ENCODE measurements at regions of chr4 and their contacts with region 1.

Region 1: GRCh38 chr4:145936142-145936996 is 2.3 kb downstream of the ZNF827 start:
- DNase-seq: peak; percentile 39 to 90
- H3K4me3 ChIP-seq: peak overlapping the region; percentile 65
- CTCF ChIP-seq: no peak
- POLR2A ChIP-seq: no peak

Region 2: DNA sequence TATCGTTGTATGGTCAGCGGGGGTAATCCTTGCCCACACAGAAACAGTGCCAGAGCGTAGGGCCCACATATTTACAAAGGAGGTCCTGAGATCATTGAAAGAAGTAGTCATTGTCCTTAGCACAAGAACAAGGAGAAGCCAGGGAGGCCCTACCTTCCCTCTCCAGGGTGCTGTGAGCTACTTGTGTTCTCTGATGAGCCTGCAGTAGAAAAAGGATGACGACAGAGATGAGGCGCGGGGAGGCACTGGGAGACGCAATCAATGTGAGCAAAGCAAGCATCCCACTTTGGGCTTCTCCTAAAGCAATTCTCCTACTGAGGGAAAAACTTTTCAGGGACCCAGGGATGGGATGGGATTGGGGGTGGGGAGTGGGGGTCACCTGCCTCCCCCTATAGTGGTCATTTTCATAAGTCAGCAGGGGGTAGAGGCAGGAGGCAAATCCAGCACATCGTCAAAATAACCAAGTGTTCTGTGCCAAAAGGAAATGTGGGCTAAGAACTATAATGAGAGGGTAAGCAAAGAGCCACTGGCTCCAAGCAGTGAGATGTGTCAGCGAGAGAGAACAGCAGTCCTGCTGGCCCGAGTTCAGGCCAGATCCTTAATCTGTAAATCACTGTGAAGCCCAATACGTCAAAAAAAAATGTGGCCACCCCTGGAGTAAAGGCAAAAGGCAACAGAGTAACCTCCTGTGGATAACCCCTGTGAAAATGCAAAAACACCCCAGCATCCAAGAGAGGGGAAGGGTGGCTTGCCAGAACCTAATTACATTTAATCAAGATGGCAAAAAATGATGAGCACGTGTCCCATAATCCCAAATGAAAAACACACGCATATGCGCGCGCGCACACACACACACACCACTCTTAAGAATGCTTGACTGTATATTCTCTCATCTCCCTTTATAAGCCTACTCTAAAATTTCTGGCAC is 1427.0 kb before region 1 on chr4:
- intact Hi-C with region 1: no loop called
- DNase-seq: no peak
- H3K4me3 ChIP-seq: no peak overlapping the region
- CTCF ChIP-seq: no peak
- POLR2A ChIP-seq: no peak

Region 3: GRCh38 chr4:145618932-145619638 is 317.3 kb before region 1 on chr4 and contains the start of gene MMAA:
- intact Hi-C with region 1: loop called (anchors 5 kb)
- DNase-seq: peak; percentile 91 to 99
- H3K4me3 ChIP-seq: peak within 1 kb of the TSS; percentile 36
- CTCF ChIP-seq: no peak
- POLR2A ChIP-seq: peak in 1 of 2 donors; percentile 88
- total RNA-seq, gene MMAA: 4.9 to 9.3 (median 7.2) TPM

Region 4: DNA sequence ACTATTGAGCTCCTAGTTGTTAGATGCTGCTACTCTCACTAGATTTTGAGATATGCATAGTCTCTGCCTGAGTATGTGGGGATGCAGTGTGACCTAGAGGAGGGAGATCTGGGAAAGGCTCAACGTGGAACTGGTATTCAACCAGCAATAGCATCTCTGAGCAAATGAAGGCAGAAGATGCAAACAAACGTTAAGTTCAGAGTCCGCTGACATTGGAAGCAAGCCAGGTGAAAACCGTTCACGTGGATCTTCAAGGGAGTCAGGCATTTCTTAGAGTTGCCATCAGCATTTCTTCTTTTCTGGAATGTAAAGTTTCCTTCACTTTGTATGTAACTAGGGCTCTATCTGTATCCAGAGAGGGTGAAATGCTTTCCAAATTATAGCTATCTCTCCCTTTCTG is 196.5 kb before region 1 on chr4:
- intact Hi-C with region 1: loop called (anchors 10 kb)
- DNase-seq: no peak
- H3K4me3 ChIP-seq: no peak overlapping the region
- CTCF ChIP-seq: no peak
- POLR2A ChIP-seq: no peak